ENCODE measurements at regions of chr7 and their contacts with region 1.

Region 1: DNA sequence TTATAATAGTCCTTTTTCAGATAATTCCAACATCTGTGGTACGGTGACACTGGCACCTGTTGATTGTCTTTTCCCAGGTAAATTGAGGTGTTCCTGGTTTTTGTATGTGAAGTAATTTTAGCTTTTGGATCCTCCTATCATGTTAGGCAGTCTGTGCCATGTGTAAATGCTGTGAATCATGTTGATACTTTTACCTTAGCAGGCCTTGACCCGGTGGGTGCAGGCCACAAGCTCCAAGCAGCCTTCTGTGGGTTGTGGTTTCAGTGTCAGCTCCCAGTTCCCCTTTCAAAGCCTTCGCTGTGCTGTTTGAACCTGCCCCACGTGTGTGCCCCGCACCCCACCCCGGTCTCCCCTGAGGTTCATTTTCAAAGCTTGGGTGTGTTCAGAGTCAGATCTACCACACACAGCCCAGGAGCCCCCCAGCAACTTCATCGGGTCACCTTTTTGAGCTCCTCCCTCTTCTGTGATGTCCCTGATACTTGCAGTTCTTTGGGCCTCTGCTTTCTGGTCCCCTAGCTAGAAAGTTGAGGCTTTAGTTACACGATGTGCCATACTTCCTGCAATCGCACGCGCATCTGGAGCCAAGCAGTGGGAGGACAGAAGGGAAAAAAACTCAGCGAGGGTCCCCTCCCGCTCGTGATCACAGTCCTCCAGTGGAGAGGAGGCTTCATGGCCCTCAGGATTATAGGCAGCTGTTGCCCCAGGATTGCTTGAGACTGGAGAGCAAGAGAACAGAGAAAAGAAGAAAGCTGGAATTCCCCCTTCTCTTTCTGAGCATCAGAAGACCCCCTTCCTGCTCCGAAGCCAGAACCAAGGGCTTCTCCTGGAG is 8.7 kb upstream of the BHLHA15 start:
- DNase-seq: peak; percentile 84
- H3K4me3 Mint-ChIP-seq: peak overlapping the region; percentile 29
- H3K27ac Mint-ChIP-seq: peak overlapping the region; percentile 44
- H3K4me1 Mint-ChIP-seq: peaks cover 48% of the 10 kb centered on the region
- H3K27me3 Mint-ChIP-seq: no peaks in the 10 kb centered on the region

Region 2: DNA sequence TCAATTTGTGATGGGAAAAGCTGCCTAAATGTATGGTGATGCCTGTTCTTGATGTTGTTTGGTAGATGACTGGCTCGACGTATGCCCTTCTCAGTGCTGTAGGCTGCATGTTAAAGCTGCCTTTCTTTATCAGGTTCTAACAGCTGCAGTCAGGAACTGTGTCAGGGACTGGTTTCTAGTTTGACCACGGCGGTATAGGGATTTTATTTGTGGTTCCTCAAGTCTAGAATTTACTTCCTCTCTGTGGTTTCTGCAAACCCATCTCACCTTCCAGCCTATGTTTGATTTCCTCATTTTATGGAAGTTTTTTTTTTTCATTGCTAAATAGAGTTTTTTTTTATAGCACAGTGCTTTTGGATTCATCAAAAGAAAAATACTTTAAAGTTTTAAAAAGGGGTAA is 69.4 kb before region 1 on chr7:
- CTCF ChIA-PET with region 1: no interaction called
- POLR2A ChIA-PET with region 1: no interaction called
- intact Hi-C with region 1: loop called (anchors 5 kb)
- DNase-seq: peak; percentile 28
- H3K4me3 Mint-ChIP-seq: no peak overlapping the region
- H3K27ac Mint-ChIP-seq: peak overlapping the region; percentile 43
- H3K4me1 Mint-ChIP-seq: peaks cover 44% of the 10 kb centered on the region
- H3K27me3 Mint-ChIP-seq: no peaks in the 10 kb centered on the region

Region 3: GRCh38 chr7:98238976-98239375 is 36.4 kb after region 1 on chr7:
- CTCF ChIA-PET with region 1: no interaction called
- POLR2A ChIA-PET with region 1: no interaction called
- intact Hi-C with region 1: no loop called
- DNase-seq: no peak
- H3K4me3 Mint-ChIP-seq: no peak overlapping the region
- H3K27ac Mint-ChIP-seq: no peak overlapping the region
- H3K4me1 Mint-ChIP-seq: no peaks in the 10 kb centered on the region
- H3K27me3 Mint-ChIP-seq: no peaks in the 10 kb centered on the region

Region 4: GRCh38 chr7:100003711-100004661 is 1801.4 kb after region 1 on chr7:
- CTCF ChIA-PET with region 1: no interaction called
- POLR2A ChIA-PET with region 1: no interaction called
- intact Hi-C with region 1: no loop called
- DNase-seq: no peak
- H3K4me3 Mint-ChIP-seq: no peak overlapping the region
- H3K27ac Mint-ChIP-seq: no peak overlapping the region
- H3K4me1 Mint-ChIP-seq: no peaks in the 10 kb centered on the region
- H3K27me3 Mint-ChIP-seq: peaks cover 2% of the 10 kb centered on the region